RWPE1 (cell line): ENCODE measurements at regions of chr3 and their contacts with region 1.

Region 1: GRCh38 chr3:11155341-11156025 is 1.2 kb downstream of the HRH1 start:
- DNase-seq: peak; percentile 69
- H3K27ac ChIP-seq: peak overlapping the region; percentile 87
- CTCF ChIP-seq: peak; percentile 93

Region 2: DNA sequence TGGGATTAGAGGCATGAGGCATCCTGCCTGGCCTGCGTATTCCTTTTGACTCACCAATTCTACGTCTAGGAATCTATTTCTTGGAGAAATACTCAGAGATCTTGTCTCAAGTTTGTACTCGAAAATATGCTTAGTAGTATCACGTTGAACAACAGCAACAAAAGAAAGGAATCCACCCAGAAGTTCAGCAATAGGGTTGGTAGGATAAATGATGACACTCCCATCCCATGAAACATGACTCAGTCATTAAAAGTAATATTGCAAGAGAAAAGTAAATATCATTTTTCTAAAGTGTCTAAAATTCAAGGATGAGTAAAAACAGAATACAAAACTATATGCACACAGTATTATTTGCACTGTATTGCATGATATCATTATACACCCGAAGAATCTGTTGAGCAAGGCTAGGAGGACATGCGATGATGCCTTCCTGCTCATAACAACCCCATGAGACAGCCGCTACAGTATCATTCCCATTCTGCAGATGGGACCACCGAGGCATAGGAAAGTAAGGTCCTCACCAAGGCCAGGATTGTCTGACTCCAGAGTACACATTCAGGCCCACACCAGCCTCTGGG is 101.5 kb before region 1 on chr3:
- CTCF ChIA-PET with region 1: no interaction called
- POLR2A ChIA-PET with region 1: no interaction called
- DNase-seq: peak; percentile 38
- H3K27ac ChIP-seq: no peak overlapping the region
- CTCF ChIP-seq: no peak

Region 3: DNA sequence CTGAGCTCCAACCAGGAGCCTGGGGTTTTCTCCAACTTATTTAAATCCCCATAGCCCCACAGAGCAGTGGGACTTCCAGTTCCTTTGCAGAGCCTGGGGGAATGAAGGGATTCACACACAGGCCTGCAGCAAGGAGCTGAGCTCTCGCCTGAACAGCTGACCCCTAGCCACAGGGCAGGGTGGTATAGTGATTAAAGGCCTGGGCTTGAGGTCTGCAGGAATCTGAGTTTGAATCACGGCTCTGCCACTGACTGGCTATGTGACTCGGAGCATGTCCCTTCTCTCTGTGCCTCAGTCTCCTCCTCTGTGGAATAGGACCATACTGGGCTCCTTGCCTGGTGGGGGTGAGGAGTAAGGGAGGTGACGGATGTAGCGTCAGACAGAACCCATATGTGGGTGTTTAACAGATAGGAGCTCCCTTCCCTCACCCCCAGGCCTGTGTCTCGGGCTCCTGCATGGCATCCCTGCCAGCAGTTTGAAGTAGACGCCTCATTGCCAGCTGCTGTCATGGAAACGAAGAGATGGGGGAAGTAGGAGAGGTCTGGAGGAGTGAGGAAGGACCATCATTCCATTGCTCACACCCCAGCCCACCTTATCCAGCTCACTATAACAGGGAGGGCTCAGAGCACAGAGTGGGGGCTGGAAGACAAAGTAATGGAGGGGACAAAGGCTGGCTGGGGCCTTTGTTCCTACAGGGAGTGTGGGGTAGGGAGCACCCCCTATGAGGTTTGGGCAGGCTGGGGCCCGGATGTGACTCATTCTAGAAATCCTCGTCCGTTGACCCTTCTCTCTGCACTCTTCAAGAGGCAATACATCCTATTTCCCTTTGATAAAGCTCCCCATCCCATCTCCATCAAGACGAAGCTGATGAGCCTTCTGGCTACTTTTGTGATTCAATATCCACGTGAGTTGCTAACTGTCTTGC is 13.7 kb after region 1 on chr3:
- CTCF ChIA-PET with region 1: no interaction called
- POLR2A ChIA-PET with region 1: no interaction called
- DNase-seq: no peak
- H3K27ac ChIP-seq: peak overlapping the region; percentile 67
- CTCF ChIP-seq: no peak

Region 4: GRCh38 chr3:11335056-11335608 is 179.6 kb after region 1 on chr3:
- CTCF ChIA-PET with region 1: interaction called, 11 read pairs
- POLR2A ChIA-PET with region 1: interaction called, 9 read pairs
- DNase-seq: peak; percentile 53
- H3K27ac ChIP-seq: peak overlapping the region; percentile 67
- CTCF ChIP-seq: peak; percentile 72